Ascending aorta (tissue), 2 donors: ENCODE measurements at regions of chr1 and their contacts with region 1.

Region 1: DNA sequence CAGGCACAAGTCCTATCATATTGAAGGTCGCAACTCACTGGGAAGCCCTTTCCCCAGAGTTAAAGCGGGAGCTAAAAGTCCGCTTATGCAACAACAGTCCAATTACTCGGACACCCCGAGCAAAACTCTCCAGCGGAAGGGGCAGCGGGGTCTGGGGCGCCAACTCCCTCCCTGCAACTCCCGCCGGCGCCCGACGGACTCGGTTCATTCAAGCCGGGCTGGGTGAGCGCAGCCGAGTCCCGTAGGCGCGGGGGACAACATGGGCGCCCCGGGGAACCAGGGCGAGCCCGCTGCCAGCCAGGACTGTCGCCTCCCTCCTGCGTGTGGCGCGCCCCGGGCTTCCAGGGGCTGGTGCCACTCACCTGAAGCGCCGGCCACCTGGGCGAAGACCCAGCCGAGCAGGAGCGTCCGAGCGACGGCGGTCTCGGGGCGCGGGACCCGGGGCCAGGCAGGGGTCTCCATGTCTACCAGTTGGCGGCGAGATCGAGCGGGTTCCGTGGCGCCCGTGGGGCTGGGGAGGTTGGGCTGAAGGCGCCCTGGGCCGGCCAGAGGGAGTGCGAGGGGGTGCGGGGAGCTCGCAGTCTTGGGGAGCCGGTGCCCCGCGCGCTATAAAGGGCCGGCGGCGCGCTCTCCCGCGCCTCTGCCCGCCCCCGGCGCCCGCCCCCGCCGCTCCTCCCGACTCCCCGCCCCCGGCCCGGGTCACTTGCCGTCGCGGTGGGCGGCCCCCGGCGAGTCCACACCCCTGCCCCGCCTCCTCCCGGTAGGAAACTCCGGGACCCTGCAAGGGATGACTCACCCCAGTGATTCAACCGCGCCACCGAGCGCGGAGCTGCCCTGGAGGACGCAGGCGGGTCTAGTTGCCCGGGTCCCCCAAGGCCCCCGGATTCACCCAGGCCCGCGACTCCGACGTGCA is at the start of gene F3:
- DNase-seq: peak; percentile 68 to 95
- H3K4me3 ChIP-seq: peak within 1 kb of the TSS; percentile 73 to 100
- H3K27ac ChIP-seq: peak within 1 kb of the TSS; percentile 88 to 97
- H3K4me1 ChIP-seq: peaks cover 8 to 21% of the 10 kb centered on the region in 2 donors
- H3K27me3 ChIP-seq: no peaks in the 10 kb centered on the region
- CTCF ChIP-seq: peak in 1 of 3 experiments; percentile 17
- total RNA-seq, gene F3: 32.5 TPM

Region 2: DNA sequence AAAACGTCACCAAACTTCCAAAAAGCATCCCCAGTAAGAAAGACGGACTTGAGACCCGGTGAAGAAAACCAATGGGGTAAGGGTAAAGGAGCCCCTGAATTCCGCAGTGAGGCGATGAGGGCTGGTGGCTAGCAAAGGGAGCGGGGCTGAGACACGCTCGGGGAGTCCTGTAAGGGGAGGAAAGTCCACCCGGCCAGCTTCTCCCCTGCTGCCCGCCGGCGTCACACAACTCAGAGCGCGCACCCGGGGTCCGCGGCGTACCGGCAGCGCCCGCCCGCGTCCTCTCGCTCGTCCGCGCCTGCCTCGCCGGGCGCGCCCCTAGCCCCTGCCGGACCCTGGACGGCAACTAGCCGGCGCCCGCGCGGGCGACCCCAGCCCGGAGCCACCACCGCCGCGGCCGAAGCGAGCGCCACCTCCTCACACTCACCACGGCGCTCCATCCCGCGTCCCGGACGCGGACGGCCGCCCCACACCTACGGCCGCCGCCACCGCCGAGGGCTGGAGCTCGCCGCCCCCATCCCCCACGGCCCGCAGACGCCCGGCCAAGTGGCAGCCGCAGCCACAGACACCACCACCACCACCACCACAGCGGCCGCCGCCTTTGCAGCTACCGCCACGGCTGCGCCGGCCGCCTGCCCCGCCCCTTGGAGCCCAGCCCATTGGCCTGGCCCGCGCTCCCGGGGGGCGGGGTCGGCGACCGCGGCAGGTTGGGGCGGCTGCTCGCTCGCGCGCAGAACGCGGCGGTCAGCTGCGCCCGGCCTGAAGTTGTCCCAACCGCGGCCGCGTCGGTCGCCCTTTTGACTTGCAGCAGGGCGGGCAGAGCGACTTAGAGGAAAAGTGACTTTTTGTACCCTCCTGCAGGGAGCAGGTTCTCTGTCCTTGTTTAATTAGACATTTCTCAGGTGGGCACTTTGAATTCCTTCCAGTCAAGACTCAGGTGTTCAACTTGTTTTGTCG is 294.0 kb before region 1 on chr1:
- intact Hi-C with region 1: loop called (anchors 10 kb)
- DNase-seq: peak in 1 of 2 donors; percentile 83
- H3K4me3 ChIP-seq: peak overlapping the region; percentile 77 to 80
- H3K27ac ChIP-seq: peak overlapping the region; percentile 74
- H3K4me1 ChIP-seq: no peaks in the 10 kb centered on the region
- H3K27me3 ChIP-seq: no peaks in the 10 kb centered on the region
- CTCF ChIP-seq: no peak

Region 3: DNA sequence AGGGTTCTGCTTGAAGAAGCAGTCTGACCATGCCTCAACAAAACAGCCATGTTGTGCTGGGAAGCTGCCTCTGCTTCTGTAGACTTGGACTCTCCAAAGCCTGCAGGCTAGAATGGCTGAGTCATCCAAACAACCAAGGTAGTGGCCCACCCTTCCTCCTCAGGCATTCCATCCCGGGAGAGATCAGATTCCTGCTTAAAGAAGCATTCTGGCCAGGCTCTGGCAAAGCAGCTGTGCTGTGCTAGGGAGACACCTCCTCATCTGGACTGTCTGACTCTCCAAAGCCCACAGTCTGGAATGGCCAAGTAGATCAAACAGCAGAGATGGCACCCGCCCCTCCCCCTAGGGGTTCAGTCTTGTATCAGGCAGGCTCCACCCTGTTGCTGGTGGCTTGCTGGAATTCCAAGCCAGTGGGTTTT is 38.5 kb after region 1 on chr1:
- intact Hi-C with region 1: loop called (anchors 2 kb)
- DNase-seq: no peak
- H3K4me3 ChIP-seq: no peak overlapping the region
- H3K27ac ChIP-seq: peak overlapping the region; percentile 45 to 67
- H3K4me1 ChIP-seq: peaks cover 7 to 21% of the 10 kb centered on the region in 2 donors
- H3K27me3 ChIP-seq: no peaks in the 10 kb centered on the region
- CTCF ChIP-seq: no peak

Region 4: DNA sequence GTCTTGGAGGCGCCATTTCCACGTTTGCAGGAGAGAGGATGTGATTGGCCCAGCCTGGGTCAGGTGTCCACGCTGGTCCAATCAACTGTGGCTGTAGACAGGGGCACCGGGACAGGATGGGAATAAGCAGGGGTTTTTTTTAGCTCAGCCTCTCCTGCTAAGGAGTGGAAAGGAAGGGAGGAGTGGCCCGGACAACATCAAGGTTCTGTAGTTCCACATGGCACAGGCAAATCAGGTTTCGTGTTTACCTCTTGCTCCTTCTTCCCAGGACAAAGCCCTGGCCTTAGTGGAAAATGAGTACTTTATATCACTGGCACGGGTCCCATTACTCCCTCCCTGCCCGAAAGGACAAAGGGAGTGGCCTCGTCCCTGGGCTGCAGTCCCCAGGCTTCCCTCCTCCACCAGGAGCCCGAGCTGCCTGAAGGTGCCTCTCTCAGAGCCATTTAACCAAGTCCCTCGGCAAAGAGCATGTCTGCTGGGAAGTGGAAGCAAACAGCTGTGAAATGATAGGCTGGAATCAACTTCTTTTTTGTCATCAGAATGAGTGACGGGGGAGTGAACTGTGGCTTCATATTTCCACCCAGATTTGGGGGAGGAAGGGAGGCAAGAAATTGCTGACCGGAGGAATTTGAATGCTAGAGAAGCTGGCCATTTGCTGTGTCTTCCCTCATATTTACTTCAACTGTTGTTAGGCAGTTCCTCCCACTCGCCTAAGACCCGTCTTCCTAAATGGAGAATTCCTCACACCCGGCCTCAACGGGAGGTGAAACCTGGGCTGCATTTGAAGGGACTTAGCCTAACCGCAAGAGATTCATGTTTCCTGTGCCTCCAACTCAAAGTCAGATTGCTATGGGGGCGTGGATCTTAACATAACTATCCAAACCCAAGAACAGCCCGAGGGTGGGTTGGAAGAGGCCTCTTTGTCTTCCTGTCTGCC is 193.8 kb after region 1 on chr1:
- intact Hi-C with region 1: loop called (anchors 5 kb)
- DNase-seq: no peak
- H3K4me3 ChIP-seq: no peak overlapping the region
- H3K27ac ChIP-seq: peak overlapping the region; percentile 29 to 61
- H3K4me1 ChIP-seq: peaks cover 0 to 7% of the 10 kb centered on the region in 2 donors
- H3K27me3 ChIP-seq: no peaks in the 10 kb centered on the region
- CTCF ChIP-seq: no peak

Region 5: DNA sequence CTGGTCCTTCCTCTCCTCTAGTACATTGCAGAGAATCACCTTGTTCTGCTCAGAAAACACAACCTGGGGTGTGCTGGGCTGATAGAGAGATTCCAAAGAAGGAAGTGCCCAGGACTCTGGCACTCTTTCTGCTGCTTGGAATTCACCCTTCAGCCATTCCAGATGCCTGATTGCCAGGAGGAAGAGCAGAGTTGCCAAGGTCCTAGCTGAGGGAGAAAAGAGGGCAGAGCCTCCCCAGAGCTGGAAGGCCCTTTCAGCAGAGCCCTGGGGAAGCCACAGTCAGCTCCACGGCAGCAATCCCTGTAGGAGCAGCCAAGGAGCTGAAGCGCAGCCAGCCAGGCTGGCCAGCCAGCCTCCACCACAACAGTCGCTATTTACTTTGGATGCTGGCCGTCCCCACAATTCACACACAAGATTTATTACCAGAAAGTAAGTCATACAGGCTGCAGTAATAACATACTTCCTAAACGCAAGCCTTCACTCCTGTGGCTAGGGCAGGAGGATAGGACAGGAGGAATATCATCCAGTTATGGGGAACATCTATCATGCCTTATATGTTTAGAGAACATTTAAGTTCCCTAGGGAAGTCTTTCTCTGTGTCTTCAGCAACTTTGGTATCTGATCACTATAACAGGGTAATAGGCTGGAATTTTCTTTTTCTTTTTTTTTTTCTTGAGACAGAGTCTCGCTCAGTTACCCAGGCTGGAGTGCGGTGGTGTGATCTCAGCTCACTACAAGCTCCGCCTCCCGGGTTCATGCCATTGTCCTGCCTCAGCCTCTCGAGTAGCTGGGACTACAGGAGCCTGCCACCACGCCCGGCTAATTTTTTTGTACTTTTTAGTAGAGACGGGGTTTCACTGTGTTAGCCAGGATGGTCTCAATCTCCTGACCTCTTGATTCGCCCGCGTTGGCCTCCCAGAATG is 242.2 kb after region 1 on chr1:
- intact Hi-C with region 1: loop called (anchors 2 kb)
- DNase-seq: peak; percentile 66 to 96
- H3K4me3 ChIP-seq: peak overlapping the region in 1 of 2 donors; percentile 54
- H3K27ac ChIP-seq: peak overlapping the region; percentile 85 to 96
- H3K4me1 ChIP-seq: peaks cover 2 to 15% of the 10 kb centered on the region in 2 donors
- H3K27me3 ChIP-seq: no peaks in the 10 kb centered on the region
- CTCF ChIP-seq: no peak

Region 6: GRCh38 chr1:94792473-94793295 is 251.3 kb after region 1 on chr1:
- intact Hi-C with region 1: loop called (anchors 2 kb)
- DNase-seq: no peak
- H3K4me3 ChIP-seq: peak overlapping the region; percentile 18 to 25
- H3K27ac ChIP-seq: peak overlapping the region; percentile 67 to 84
- H3K4me1 ChIP-seq: peaks cover 6 to 23% of the 10 kb centered on the region in 2 donors
- H3K27me3 ChIP-seq: no peaks in the 10 kb centered on the region
- CTCF ChIP-seq: peak; percentile 28 to 60 (median 41)